HepG2 (cell line): ENCODE measurements at regions of chr6 and their contacts with region 1.

Region 1: GRCh38 chr6:51559059-51559458 is 528.4 kb downstream of the PKHD1 start:
- DNase-seq: peak; percentile 18
- ATAC-seq: peak; percentile 94
- H3K4me3 ChIP-seq: no peak overlapping the region
- H3K27ac ChIP-seq: no peak overlapping the region
- H3K4me1 ChIP-seq: no peaks in the 10 kb centered on the region
- H3K27me3 ChIP-seq: no peaks in the 10 kb centered on the region
- CTCF ChIP-seq: peak; percentile 71
- EP300 ChIP-seq: no peak
- POLR2A ChIP-seq: no peak
- RAD21 ChIP-seq: no peak

Region 2: DNA sequence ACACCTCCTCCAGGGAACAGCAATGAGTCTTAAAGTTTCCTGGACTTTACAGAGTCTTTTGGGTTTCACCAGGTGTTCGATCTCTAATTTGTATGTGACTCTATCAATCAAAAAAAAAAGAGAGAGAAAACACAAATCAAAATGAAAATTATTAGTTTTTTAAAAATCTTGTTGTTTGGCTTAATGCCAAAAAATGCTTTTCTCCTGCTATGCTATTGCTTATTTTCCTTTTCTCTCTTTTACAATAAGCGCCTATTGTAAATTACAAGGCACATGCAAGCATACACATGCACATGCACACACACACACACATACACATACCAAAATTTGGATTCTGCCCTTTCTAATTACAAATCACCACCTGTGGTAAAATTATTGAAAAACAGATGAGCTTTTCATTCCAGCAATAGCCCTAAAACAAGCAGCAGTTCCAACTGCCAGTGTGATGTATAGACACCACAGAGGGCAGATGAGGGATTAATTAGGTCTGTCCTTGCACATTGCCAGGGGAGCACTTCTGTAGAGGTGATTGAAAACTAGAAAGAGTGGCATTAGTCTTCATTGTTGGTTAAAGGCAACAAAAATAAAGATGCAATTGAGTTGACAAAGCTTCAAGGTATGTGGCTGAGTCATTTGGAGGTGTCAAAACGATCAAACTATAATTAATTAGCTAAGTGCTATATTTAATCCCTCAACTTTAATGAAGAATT is 108.7 kb before region 1 on chr6:
- CTCF ChIA-PET with region 1: no interaction called
- POLR2A ChIA-PET with region 1: no interaction called
- in situ Hi-C with region 1: no loop called
- intact Hi-C with region 1: no loop called
- DNase-seq: no peak
- ATAC-seq: no peak
- H3K4me3 ChIP-seq: no peak overlapping the region
- H3K27ac ChIP-seq: no peak overlapping the region
- H3K4me1 ChIP-seq: no peaks in the 10 kb centered on the region
- H3K27me3 ChIP-seq: no peaks in the 10 kb centered on the region
- CTCF ChIP-seq: no peak
- EP300 ChIP-seq: no peak
- POLR2A ChIP-seq: no peak
- RAD21 ChIP-seq: no peak

Region 3: DNA sequence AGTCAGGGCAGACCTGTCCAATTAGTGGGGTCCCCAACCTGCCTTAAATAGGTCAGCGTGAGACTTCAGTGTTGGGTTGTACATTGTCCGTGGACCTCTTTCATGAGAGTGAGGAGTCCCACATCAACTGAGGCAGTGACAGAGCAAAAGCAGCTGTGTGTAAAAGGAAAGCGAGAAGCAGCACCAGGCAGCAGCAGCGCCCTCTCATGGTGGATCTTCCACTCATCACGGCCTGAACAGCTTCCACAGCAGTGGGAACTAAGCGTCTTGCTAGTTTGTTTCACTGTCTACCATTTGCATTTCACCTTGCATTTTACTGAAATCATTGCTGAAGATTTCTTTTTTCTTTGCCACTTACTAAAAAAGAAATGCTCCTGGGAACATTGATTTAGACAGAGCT is 194.6 kb after region 1 on chr6:
- CTCF ChIA-PET with region 1: no interaction called
- POLR2A ChIA-PET with region 1: no interaction called
- in situ Hi-C with region 1: no loop called
- intact Hi-C with region 1: loop called (anchors 1 kb)
- DNase-seq: peak; percentile 3
- ATAC-seq: peak; percentile 79
- H3K4me3 ChIP-seq: no peak overlapping the region
- H3K27ac ChIP-seq: no peak overlapping the region
- H3K4me1 ChIP-seq: no peaks in the 10 kb centered on the region
- H3K27me3 ChIP-seq: no peaks in the 10 kb centered on the region
- CTCF ChIP-seq: peak; percentile 83
- EP300 ChIP-seq: no peak
- POLR2A ChIP-seq: no peak
- RAD21 ChIP-seq: no peak

Region 4: DNA sequence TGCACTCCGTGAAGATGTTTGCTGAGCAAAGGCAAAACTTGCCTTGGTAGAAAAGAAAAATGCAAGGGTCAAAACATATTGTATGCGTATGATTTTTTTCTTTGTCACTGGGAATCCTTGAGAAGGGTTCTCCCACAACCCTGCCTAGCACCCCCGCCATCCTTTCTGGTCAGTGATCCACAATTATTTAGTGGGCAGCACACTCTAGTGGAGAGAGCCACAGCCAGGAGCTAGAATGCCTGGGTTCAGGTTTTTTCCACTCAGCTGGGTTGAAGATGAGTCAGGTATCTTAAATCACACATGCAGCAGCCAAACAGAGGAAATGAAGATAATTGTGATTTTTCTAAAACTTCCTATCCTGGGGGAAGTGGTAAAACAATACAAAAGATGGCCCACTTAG is 285.3 kb after region 1 on chr6:
- CTCF ChIA-PET with region 1: no interaction called
- POLR2A ChIA-PET with region 1: no interaction called
- in situ Hi-C with region 1: no loop called
- intact Hi-C with region 1: loop called (anchors 10 kb)
- DNase-seq: no peak
- ATAC-seq: no peak
- H3K4me3 ChIP-seq: no peak overlapping the region
- H3K27ac ChIP-seq: no peak overlapping the region
- H3K4me1 ChIP-seq: no peaks in the 10 kb centered on the region; the same call in 1 of the 2 replicates
- H3K27me3 ChIP-seq: 0 out of 5 replicates have a peak, but pooled peaks cover 0 to 1% of the 10 kb centered on the region in 2 experiments
- CTCF ChIP-seq: peak; percentile 43; the same call in 1 of the 2 replicates
- EP300 ChIP-seq: no peak
- POLR2A ChIP-seq: no peak
- RAD21 ChIP-seq: no peak

Region 5: GRCh38 chr6:51959744-51960383 is 400.8 kb after region 1 on chr6:
- CTCF ChIA-PET with region 1: no interaction called
- POLR2A ChIA-PET with region 1: no interaction called
- in situ Hi-C with region 1: no loop called
- intact Hi-C with region 1: loop called (anchors 5 kb)
- DNase-seq: peak; percentile 70
- ATAC-seq: peak; percentile 97
- H3K4me3 ChIP-seq: no peak overlapping the region
- H3K27ac ChIP-seq: no peak overlapping the region
- H3K4me1 ChIP-seq: no peaks in the 10 kb centered on the region
- H3K27me3 ChIP-seq: no peaks in the 10 kb centered on the region
- CTCF ChIP-seq: peak; percentile 95
- EP300 ChIP-seq: no peak
- POLR2A ChIP-seq: no peak
- RAD21 ChIP-seq: peak; percentile 74

Region 6: GRCh38 chr6:52020945-52021570 is 462.0 kb after region 1 on chr6:
- CTCF ChIA-PET with region 1: no interaction called
- POLR2A ChIA-PET with region 1: no interaction called
- in situ Hi-C with region 1: no loop called
- intact Hi-C with region 1: loop called (anchors 2 kb)
- DNase-seq: peak; percentile 36
- ATAC-seq: no peak; the same call in 2 of the 3 replicates
- H3K4me3 ChIP-seq: no peak overlapping the region
- H3K27ac ChIP-seq: no peak overlapping the region
- H3K4me1 ChIP-seq: peaks cover 21% of the 10 kb centered on the region
- H3K27me3 ChIP-seq: no peaks in the 10 kb centered on the region
- CTCF ChIP-seq: peak; percentile 73
- EP300 ChIP-seq: no peak
- POLR2A ChIP-seq: no peak
- RAD21 ChIP-seq: peak; percentile 52; the same call in 1 of the 2 replicates